ENCODE measurements at regions of chr7 and their contacts with region 1.

Region 1: DNA sequence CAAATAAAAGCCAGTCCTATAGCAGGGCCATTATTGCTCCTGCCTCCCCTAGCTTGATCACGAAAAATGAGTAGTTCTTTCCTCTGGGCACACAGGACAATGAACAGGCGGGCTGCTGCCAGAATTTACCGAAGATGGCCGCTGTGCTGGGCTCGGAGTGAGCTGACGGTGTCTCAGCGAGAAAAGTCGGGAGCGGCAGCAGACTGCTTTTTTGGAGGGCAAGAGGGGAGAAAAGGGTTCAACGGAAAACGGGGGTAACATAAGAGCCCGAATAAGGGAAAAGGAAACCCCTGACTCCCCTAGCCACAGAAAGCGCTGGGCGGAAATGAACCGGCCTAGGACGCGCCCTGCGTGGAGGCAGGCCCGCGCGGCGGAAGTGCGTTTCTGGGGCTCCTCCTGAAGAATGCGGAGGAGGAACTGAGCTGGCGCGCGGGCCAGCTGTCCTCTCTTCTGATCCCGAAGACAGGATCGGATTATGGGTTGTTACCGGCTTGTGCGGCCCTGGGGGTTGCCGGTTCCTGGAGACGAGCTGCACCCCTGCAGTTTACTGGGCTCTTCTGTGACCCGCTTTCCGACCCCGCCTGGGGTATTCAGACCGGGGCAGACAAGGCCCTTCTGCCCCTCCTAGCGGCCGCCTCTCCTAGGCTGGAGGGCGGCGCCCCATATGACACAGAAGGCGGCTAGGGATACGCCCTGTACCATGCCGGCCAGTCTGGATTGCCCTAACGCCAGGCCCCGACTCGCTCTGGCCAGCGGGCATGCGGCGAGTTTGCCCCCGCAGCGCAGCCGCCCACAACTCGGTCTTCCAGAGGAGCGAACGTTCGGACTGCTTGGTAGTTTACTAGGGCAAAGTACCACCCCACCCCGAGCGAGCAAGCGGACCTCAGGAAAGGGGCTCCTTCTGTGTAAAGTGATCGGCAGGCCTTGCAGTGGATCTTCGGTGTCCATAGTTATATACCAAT is 30.1 kb upstream of the KMT2E start:
- DNase-seq: peak; percentile 42
- ATAC-seq: peak; percentile 96
- H3K4me3 ChIP-seq: peak overlapping the region; percentile 75
- H3K27ac ChIP-seq: peak overlapping the region; percentile 98
- H3K4me1 ChIP-seq: peaks cover 14% of the 10 kb centered on the region; the same call in 1 of the 2 replicates
- H3K27me3 ChIP-seq: no peaks in the 10 kb centered on the region
- CTCF ChIP-seq: peak; percentile 36 to 61 (median 50); a peak in 5 of 6 replicates
- EP300 ChIP-seq: 0 out of 4 replicates have a peak, but pooled peaks of 1 of the 2 experiments have one; percentile 24
- POLR2A ChIP-seq: peak; percentile 90
- RAD21 ChIP-seq: peak; percentile 37; the same call in 1 of the 2 replicates

Region 2: DNA sequence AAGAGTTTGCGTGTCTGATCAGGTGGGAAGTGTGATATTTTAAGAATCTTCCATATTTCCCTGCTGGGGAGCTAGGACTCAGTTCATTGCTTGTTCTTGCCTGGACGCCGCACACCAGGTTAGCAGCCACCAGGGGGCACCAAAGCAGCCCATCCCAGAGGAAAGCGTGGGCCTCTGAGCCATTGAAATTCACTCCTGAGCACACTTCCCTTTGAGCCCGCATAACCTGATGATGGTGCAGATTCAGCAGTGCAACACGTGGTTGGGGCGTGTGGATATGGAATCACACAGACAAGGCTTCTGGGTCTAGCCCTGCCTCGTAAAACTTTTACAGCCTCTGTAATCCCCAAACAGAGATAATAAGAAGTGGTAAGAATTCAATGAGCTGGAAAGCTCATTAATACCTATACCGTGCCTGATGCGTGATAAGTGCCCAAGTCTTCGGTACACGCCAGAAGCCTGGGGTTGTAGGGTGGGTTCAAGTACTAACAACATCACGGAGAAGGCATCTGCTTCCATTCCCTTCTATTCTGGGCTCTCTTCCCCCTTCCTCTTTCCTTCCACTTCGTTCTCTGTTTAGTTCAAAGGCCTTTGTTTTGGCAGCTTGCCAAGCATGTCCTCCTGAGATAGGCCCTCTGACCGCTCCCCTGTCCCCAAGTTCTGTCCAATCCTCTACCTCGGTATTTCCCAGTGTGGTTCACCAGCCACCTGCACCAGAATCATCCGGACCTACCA is 100.0 kb before region 1 on chr7:
- CTCF ChIA-PET with region 1: interaction called, 27 read pairs
- POLR2A ChIA-PET with region 1: no interaction called
- RAD21 ChIA-PET with region 1: interaction called, 8 read pairs
- SMC1A ChIA-PET with region 1: interaction called, 12 read pairs
- in situ Hi-C with region 1: no loop called
- intact Hi-C with region 1: no loop called
- DNase-seq: peak; percentile 61
- ATAC-seq: peak; percentile 92
- H3K4me3 ChIP-seq: no peak overlapping the region
- H3K27ac ChIP-seq: no peak overlapping the region
- H3K4me1 ChIP-seq: peaks cover 19% of the 10 kb centered on the region
- H3K27me3 ChIP-seq: no peaks in the 10 kb centered on the region
- CTCF ChIP-seq: peak; percentile 93 to 96 (median 94); a peak in 5 of 6 replicates
- EP300 ChIP-seq: no peak
- POLR2A ChIP-seq: no peak
- RAD21 ChIP-seq: peak; percentile 89

Region 3: GRCh38 chr7:104903044-104903443 is 80.8 kb before region 1 on chr7:
- CTCF ChIA-PET with region 1: no interaction called
- POLR2A ChIA-PET with region 1: no interaction called
- RAD21 ChIA-PET with region 1: no interaction called
- SMC1A ChIA-PET with region 1: no interaction called
- in situ Hi-C with region 1: no loop called
- intact Hi-C with region 1: no loop called
- DNase-seq: no peak
- ATAC-seq: no peak
- H3K4me3 ChIP-seq: no peak overlapping the region
- H3K27ac ChIP-seq: no peak overlapping the region
- H3K4me1 ChIP-seq: peaks cover 8% of the 10 kb centered on the region
- H3K27me3 ChIP-seq: no peaks in the 10 kb centered on the region
- CTCF ChIP-seq: no peak
- EP300 ChIP-seq: no peak
- POLR2A ChIP-seq: no peak
- RAD21 ChIP-seq: no peak

Region 4: DNA sequence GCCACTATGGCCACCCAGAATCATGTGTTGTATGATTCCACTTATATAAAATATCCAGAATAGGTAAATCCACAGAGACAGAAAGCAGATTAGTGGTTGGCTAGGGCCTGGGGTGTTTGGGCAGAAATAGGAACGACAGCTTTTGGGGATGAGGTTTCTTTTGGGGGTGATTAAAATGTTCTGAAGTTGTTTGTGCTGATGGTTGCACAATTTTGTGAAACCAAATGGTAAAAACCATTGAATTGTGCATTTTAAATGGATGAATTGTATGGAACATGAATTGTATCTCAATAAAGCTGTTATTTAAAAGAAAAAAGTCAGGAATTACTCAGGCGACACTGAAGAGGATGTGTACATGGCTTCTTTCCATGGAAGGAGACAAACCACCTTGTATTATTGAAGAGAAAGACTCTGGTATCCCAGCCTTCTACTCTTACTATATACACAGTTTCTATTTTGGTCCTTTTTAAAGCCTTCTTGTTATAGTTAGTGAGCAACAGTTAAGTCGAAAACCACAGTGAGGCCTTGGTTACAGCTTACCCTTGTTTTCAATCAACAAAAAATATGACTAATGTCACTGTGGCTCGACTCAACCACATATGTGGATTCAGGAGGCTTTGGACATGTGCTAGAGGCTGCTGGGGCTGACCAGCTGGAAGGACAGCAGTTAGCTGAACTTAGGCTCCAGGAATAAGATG is 27.0 kb before region 1 on chr7:
- CTCF ChIA-PET with region 1: interaction called, 20 read pairs
- POLR2A ChIA-PET with region 1: interaction called, 8 read pairs
- RAD21 ChIA-PET with region 1: interaction called, 24 read pairs
- SMC1A ChIA-PET with region 1: interaction called, 39 read pairs
- in situ Hi-C with region 1: no loop called
- intact Hi-C with region 1: no loop called
- DNase-seq: peak; percentile 77
- ATAC-seq: peak; percentile 94
- H3K4me3 ChIP-seq: no peak overlapping the region
- H3K27ac ChIP-seq: peak overlapping the region; percentile 58
- H3K4me1 ChIP-seq: peaks cover 17% of the 10 kb centered on the region
- H3K27me3 ChIP-seq: no peaks in the 10 kb centered on the region
- CTCF ChIP-seq: no peak
- EP300 ChIP-seq: peak; percentile 83 to 91
- POLR2A ChIP-seq: no peak
- RAD21 ChIP-seq: no peak

Region 5: GRCh38 chr7:105024743-105025142 is 40.9 kb after region 1 on chr7:
- CTCF ChIA-PET with region 1: interaction called, 17 read pairs
- POLR2A ChIA-PET with region 1: interaction called, 9 read pairs
- RAD21 ChIA-PET with region 1: interaction called, 25 read pairs
- SMC1A ChIA-PET with region 1: interaction called, 45 read pairs
- in situ Hi-C with region 1: no loop called
- intact Hi-C with region 1: no loop called
- DNase-seq: no peak
- ATAC-seq: peak; percentile 1; the same call in 1 of the 3 replicates
- H3K4me3 ChIP-seq: 0 out of 2 replicates have a peak overlapping the region, but pooled peaks have one; percentile 28
- H3K27ac ChIP-seq: no peak overlapping the region
- H3K4me1 ChIP-seq: peaks cover 28% of the 10 kb centered on the region
- H3K27me3 ChIP-seq: no peaks in the 10 kb centered on the region
- CTCF ChIP-seq: no peak
- EP300 ChIP-seq: no peak
- POLR2A ChIP-seq: no peak
- RAD21 ChIP-seq: no peak

Region 6: DNA sequence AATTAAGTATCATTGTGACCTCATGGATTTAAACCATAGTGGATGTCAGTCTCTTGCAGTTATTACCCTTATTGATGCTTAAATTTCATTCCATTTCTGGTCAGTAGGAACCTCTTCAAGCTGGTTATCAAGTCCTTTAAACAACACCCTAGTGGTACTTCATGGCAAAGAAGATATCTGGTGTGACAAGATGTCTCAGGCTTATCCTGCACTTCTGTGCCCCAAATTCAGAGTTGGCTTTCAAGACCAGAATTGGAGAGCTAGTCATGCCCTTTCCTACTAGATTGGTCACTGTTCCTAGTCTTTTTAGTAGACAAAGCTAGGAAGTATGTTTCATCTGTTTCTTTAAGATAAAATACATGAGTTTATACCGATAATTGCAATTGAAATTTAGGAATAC is 85.0 kb after region 1 on chr7:
- CTCF ChIA-PET with region 1: interaction called, 16 read pairs
- POLR2A ChIA-PET with region 1: no interaction called
- RAD21 ChIA-PET with region 1: interaction called, 4 read pairs
- SMC1A ChIA-PET with region 1: interaction called, 14 read pairs
- in situ Hi-C with region 1: no loop called
- intact Hi-C with region 1: no loop called
- DNase-seq: no peak
- ATAC-seq: no peak
- H3K4me3 ChIP-seq: no peak overlapping the region
- H3K27ac ChIP-seq: no peak overlapping the region
- H3K4me1 ChIP-seq: no peaks in the 10 kb centered on the region
- H3K27me3 ChIP-seq: no peaks in the 10 kb centered on the region
- CTCF ChIP-seq: no peak
- EP300 ChIP-seq: no peak
- POLR2A ChIP-seq: no peak
- RAD21 ChIP-seq: no peak

Region 7: DNA sequence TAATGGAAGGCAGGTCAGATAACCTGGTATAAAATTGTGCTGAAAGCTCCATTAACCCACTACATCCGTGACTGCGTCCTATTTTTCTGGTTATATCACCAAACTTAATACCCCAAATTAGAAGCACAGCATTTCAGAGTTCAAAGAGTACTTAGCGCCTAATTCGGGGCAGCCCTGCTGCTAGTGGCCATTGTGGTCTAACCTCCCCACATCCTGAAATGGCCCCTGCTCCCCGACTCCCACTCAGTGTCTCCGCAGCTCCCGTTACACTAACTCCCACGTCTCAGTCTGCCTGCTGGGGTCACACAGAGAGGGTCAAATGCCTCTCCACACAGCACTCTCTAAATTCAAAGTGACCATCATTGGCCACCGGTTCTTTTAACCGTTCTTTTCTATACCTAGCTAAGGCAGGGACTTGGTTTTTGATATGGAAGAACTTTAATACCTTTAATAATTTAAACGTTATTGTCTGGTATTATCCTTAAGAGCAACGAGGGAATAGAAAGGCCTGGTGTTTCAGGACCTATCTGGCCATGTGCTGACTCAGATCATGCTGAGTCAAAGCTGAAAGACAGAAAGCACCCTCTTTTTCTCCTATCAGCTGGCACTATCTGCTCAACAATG is 147.3 kb after region 1 on chr7:
- CTCF ChIA-PET with region 1: interaction called, 3 read pairs
- POLR2A ChIA-PET with region 1: no interaction called
- RAD21 ChIA-PET with region 1: interaction called, 10 read pairs
- SMC1A ChIA-PET with region 1: interaction called, 7 read pairs
- in situ Hi-C with region 1: no loop called
- intact Hi-C with region 1: no loop called
- DNase-seq: peak; percentile 38
- ATAC-seq: peak; percentile 94
- H3K4me3 ChIP-seq: no peak overlapping the region
- H3K27ac ChIP-seq: no peak overlapping the region
- H3K4me1 ChIP-seq: peaks cover 16% of the 10 kb centered on the region
- H3K27me3 ChIP-seq: no peaks in the 10 kb centered on the region
- CTCF ChIP-seq: no peak
- EP300 ChIP-seq: no peak
- POLR2A ChIP-seq: no peak
- RAD21 ChIP-seq: no peak

Region 8: DNA sequence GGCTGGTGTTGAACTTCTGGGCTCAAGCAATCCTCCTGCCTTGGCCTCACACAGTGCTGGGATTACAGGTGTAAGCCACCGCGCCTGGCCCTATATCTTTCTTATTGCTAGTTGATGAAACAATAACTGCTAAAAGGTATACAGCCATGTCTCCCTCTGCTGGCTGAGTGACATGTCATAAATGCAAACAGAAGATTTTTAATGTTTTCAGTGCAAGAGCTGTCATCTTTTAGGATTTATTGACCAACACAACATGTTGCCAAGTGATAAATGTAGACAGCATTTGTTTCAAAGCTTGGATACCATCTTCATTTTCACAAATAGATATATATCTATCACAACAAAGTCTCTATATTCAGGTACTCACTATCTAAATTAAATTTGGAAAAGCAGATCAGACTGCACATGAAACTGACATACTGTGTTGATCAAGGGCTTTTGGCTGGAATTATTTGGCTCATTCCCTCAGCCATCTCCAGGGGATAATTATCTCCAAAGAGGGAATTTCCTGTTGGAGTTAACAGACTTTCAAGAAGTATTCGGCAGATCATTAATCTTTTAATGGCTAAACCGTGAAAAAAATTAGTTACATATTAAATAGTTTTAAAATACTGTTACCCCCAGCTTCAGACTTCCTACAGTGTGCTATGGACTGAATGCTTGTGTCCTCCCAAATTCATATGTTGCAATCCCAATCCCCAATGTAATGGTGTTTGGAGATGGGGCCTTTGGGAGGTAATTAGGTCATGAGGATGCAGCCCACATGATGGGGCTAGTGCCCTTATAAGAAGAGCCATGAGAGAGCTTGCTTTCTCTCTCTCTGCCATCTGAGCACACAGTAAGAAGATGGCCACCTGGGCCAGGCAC is 446.1 kb after region 1 on chr7:
- CTCF ChIA-PET with region 1: interaction called, 15 read pairs
- POLR2A ChIA-PET with region 1: no interaction called
- RAD21 ChIA-PET with region 1: interaction called, 9 read pairs
- SMC1A ChIA-PET with region 1: interaction called, 18 read pairs
- in situ Hi-C with region 1: no loop called
- intact Hi-C with region 1: loop called (anchors 10 kb)
- DNase-seq: no peak
- ATAC-seq: peak; percentile 88
- H3K4me3 ChIP-seq: no peak overlapping the region
- H3K27ac ChIP-seq: no peak overlapping the region
- H3K4me1 ChIP-seq: no peaks in the 10 kb centered on the region
- H3K27me3 ChIP-seq: no peaks in the 10 kb centered on the region
- CTCF ChIP-seq: peak; percentile 46 to 66 (median 56)
- EP300 ChIP-seq: no peak
- POLR2A ChIP-seq: no peak
- RAD21 ChIP-seq: peak; percentile 76

Region 9: GRCh38 chr7:106480161-106480579 is 1496.3 kb after region 1 on chr7:
- CTCF ChIA-PET with region 1: no interaction called
- POLR2A ChIA-PET with region 1: no interaction called
- RAD21 ChIA-PET with region 1: no interaction called
- SMC1A ChIA-PET with region 1: no interaction called
- in situ Hi-C with region 1: no loop called
- intact Hi-C with region 1: no loop called
- DNase-seq: no peak
- ATAC-seq: peak; percentile 85
- H3K4me3 ChIP-seq: no peak overlapping the region
- H3K27ac ChIP-seq: no peak overlapping the region; the same call in 1 of the 2 replicates
- H3K4me1 ChIP-seq: peaks cover 11% of the 10 kb centered on the region
- H3K27me3 ChIP-seq: no peaks in the 10 kb centered on the region
- CTCF ChIP-seq: no peak
- EP300 ChIP-seq: peak; percentile 28 to 33; a peak in 2 of 4 replicates
- POLR2A ChIP-seq: no peak
- RAD21 ChIP-seq: no peak